ENCODE measurements at regions of chr2 and their contacts with region 1.

Region 1: DNA sequence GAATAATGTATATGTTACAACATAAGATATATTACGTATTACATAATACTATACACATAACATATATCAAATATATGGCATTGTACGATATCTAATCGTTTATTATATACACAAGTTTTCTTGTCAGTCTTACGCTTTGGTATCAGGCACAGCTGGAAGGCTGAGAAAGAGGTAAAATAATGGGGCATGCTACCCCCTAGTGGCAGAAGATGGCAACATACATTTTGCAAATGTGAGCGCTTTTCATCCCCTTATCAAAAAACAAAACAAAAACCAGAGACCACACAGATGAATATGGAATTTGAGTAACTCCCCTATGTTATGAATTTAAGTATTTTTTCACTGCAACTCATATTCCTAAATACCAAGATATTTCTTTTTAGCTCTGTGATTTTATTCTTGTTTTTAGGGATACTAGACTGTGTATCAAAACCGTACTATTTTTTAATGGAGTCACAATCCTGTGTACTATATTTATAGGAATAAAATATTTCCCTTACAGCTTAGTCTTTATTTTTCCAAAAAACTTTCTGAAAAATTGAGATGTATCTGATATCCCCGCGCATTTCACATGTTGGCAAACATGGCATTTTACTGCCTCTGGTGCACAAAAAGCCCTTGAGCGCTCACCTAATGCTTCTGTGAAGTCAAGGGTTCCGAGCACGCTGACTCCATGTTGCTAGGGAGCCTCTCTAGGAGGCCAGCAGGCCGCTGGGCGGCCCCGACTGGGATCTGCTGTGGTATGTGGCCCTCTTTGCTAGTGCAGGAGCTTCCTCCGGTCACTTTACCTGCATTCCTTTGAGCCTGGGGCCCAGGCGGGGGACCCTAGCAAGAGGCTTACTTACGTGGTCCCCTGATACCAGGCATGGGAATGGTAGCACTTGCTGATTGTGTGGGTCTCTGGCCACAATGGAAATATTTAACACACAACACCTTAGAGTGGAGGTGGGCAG is 62.5 kb downstream of the SLC4A3 start:
- DNase-seq: peak; percentile 42 to 49
- H3K4me3 ChIP-seq: no peak overlapping the region
- H3K27ac ChIP-seq: peak overlapping the region; percentile 99
- H3K4me1 ChIP-seq: peaks cover 55% of the 10 kb centered on the region
- H3K27me3 ChIP-seq: no peaks in the 10 kb centered on the region
- CTCF ChIP-seq: peak; percentile 73

Region 2: DNA sequence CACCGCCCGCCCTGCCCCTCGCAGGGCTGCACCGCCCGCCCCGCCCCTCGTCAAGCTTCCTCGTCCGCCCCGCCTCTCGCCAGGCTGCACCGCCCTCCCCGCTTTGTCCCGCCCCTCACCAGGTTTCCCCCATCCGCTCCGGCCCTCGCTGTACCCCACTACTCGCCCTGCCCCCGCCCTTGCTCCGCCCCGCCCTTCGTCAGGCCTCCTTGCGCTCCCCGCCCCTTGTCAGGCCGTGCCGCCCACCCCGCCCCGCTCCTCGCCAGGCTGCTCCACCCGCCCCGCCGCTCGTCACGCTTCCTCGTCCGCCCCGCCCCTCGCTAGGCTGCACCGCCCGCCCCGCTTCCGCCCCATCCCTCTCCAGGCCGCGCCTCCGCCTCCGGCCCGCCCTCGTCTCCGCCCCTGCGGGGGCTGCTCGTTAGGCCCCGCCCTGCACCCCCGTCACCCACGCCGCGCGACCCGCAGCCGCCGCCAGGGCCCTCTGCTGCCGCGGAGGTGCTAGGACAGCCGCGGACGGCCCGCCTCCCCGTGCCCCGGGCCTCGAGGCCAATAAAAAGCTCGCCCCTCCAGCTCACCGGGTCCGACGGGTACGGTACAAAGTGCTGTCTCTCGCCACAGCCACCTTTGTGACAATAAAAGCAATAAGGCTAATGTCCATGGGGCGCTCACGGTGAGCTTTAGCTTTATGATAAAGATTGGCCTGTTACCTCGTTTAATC is 301.7 kb before region 1 on chr2:
- CTCF ChIA-PET with region 1: no interaction called
- POLR2A ChIA-PET with region 1: no interaction called
- intact Hi-C with region 1: loop called (anchors 1 kb)
- DNase-seq: peak; percentile 71 to 98
- H3K4me3 ChIP-seq: peak overlapping the region; percentile 53
- H3K27ac ChIP-seq: peak overlapping the region; percentile 30
- H3K4me1 ChIP-seq: peaks cover 6% of the 10 kb centered on the region; the same call in 1 of the 2 replicates
- H3K27me3 ChIP-seq: no peaks in the 10 kb centered on the region
- CTCF ChIP-seq: peak; percentile 60

Region 3: GRCh38 chr2:219509780-219510511 is 180.0 kb before region 1 on chr2:
- CTCF ChIA-PET with region 1: interaction called, 12 read pairs
- POLR2A ChIA-PET with region 1: interaction called, 3 read pairs
- intact Hi-C with region 1: no loop called
- DNase-seq: peak in 1 of 2 experiments; percentile 50
- H3K4me3 ChIP-seq: peak overlapping the region; percentile 53; the same call in 1 of the 2 replicates
- H3K27ac ChIP-seq: no peak overlapping the region
- H3K4me1 ChIP-seq: no peaks in the 10 kb centered on the region
- H3K27me3 ChIP-seq: peaks cover 47% of the 10 kb centered on the region
- CTCF ChIP-seq: peak; percentile 70

Region 4: GRCh38 chr2:219597552-219598307 is 92.2 kb before region 1 on chr2 and contains the start of gene STK11IP:
- CTCF ChIA-PET with region 1: interaction called, 4 read pairs
- POLR2A ChIA-PET with region 1: interaction called, 3 read pairs
- intact Hi-C with region 1: loop called (anchors 2 kb)
- DNase-seq: peak; percentile 93 to 95
- H3K4me3 ChIP-seq: peak within 1 kb of the TSS; percentile 70
- H3K27ac ChIP-seq: peak within 1 kb of the TSS; percentile 85
- H3K4me1 ChIP-seq: peaks cover 19% of the 10 kb centered on the region
- H3K27me3 ChIP-seq: no peaks in the 10 kb centered on the region
- CTCF ChIP-seq: no peak
- total RNA-seq, gene STK11IP: 40.6 and 42.5 TPM in 2 replicates

Region 5: GRCh38 chr2:219661197-219661954 is 28.6 kb before region 1 on chr2:
- CTCF ChIA-PET with region 1: interaction called, 7 read pairs
- POLR2A ChIA-PET with region 1: interaction called, 10 read pairs
- intact Hi-C with region 1: loop called (anchors 1 kb)
- DNase-seq: peak in 1 of 2 experiments; percentile 56
- H3K4me3 ChIP-seq: peak overlapping the region; percentile 21; the same call in 1 of the 2 replicates
- H3K27ac ChIP-seq: peak overlapping the region; percentile 94
- H3K4me1 ChIP-seq: peaks cover 29% of the 10 kb centered on the region
- H3K27me3 ChIP-seq: no peaks in the 10 kb centered on the region
- CTCF ChIP-seq: no peak

Region 6: GRCh38 chr2:219701847-219702634 is 12.1 kb after region 1 on chr2:
- CTCF ChIA-PET with region 1: no interaction called
- POLR2A ChIA-PET with region 1: no interaction called
- intact Hi-C with region 1: no loop called
- DNase-seq: no peak
- H3K4me3 ChIP-seq: no peak overlapping the region
- H3K27ac ChIP-seq: no peak overlapping the region
- H3K4me1 ChIP-seq: peaks cover 8% of the 10 kb centered on the region
- H3K27me3 ChIP-seq: no peaks in the 10 kb centered on the region
- CTCF ChIP-seq: no peak

Measured in PC-9 (cell line).